Left cardiac atrium (tissue), 4 donors: ENCODE measurements at regions of chr21 and their contacts with region 1.

Region 1: DNA sequence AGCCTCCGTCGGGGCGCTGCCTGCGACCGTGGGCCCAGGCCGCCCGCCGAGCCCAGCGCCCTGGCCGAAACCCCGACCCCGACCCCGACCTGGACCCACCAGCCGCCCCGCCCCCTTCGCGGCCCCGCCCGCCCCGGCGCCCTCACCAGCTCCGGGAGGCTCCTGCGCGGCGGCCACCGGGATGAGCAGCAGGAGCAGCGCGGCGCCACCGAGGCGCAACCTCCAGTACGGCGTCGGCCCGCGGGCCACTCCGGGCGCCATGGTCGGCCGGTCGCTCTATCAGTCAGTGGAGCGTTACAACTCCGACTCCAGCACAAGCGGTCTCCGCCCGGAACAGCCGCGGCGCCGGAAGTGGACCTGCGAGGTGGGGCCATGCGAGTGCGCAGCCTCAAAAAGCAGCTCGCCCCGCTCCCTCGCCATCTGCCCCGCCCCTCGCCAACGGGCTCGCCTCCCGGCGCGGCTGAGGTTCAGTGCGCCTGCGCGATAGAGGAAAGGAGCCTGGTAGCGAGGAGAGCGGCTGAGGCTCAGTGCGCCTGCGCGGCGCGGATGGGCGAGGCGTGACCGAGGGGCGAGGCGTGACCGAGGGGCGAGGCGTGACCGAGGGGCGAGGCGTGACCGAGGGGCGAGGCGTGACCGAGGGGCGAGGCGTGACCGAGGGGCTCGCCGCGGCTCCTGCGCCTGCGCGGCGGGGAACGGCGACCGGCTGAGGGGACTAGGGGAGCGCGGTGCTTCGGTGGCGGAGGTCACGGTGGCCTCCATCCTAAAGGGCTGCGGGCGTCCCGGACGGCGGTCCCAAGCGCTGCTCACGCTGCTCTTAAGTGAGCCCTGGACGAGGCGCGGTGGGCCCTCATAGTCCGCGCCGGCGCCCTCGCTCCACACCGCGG is at the start of gene PTTG1IP:
- DNase-seq: peak; percentile 99
- ATAC-seq: peak; percentile 82 to 87
- total RNA-seq, gene PTTG1IP: 181 to 195 TPM

Region 2: DNA sequence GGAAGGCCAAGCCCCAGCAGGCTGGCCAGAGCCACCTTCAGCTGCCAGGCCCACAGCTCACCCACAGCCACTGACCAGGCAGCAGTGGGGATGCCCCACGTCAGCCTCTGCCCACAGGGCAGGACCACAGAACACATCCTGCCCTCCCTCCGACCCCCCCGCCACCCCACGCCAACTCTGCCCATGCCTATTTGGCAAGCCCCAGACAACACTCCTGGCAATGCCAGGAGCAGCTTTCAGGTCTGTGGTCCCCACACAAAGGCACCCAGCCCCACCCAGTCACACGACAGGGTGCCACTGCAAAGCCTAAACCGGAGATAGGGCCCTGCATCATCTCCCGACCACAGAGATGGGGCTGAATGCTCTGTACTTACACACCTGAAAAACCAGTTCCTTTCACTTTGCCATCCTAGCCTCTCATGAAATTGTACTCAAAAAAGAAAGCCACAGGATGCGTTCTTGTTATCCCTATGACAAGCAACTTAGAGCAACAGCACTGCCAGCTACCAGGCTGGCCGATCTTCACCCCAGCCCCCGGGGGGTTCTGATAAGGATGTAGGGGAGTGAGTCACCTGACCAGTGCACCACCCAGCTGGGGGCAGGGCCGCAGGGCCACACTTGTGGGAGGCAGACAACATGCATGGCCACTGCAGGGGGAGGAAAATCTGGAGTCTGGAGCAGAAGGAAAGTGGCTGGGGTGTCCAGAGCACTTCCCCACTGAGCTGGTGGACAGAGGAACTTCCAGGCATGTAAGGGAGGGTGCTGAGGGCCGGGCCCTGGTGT is 108.2 kb before region 1 on chr21:
- intact Hi-C with region 1: no loop called
- DNase-seq: no peak
- ATAC-seq: no peak

Region 3: GRCh38 chr21:44801468-44802395 is 71.9 kb before region 1 on chr21 and contains the start of gene UBE2G2:
- intact Hi-C with region 1: loop called (anchors 2 to 5 kb)
- DNase-seq: peak; percentile 85
- ATAC-seq: peak; percentile 98
- total RNA-seq, gene UBE2G2: 62.0 to 83.0 TPM

Region 4: DNA sequence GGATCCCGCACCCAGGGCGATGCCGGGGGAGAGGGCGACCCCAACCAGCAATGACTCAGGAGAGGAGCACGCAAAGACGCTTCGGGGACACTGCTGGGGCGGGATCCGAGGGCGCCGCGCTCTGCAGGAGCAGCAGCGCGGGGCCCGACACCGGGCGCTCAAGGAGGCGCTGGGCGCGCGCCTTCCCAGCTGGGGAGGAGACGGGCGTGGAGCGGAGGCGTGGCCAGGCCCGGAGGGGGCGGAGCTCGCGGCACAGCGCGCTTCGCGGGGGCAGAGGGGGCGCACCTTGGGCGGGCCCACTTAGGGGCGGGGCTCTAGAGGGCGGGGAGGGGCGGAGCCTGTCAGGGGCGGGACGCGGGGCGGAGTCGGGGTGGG is 56.1 kb before region 1 on chr21:
- intact Hi-C with region 1: loop called (anchors 5 kb)
- DNase-seq: peak; percentile 92
- ATAC-seq: peak; percentile 93 to 95